ENCODE measurements at regions of chr22 and their contacts with region 1.

Region 1: DNA sequence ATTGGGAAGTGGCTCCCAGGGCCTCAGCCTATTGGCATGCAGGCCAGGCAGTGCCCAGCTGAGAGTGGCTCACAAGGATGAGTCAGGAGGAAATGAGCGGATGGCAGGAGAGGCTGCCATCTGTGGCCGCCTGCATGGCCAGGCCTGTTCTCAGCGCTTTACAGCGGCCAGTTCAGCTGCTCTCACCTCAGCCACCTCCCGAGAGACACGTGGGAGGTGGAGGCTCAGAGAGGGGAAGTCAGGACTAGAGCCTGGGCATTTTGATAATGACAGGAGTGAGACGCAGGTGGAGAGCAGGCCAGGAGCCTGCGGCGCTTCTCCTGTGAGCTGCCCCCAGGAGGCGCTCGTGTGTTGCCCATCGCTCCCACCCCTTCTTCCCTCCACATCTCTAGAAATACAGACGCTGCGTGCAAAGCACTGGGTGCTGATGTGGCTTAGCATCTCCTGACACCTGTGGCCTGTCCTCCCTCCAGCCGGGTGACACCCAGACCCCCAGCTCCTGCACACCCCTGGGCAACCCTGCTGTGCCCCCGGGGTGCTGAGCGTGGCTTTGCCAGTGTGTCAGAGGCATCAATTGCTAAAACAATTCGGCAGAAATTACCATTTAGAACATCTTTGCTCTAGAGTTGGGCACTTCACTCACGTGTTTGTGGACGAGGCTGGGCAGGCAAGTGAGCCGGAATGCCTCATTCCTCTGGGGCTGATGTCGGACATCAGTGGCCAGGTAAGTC is 21.4 kb upstream of the PANX2 start:
- DNase-seq: peak; percentile 45
- ATAC-seq: peak; percentile 55
- H3K4me3 ChIP-seq: no peak overlapping the region
- H3K27ac ChIP-seq: no peak overlapping the region
- H3K4me1 ChIP-seq: no peaks in the 10 kb centered on the region; the same call in 1 of the 2 replicates
- H3K27me3 ChIP-seq: no peaks in the 10 kb centered on the region; the same call in 1 of the 2 replicates
- CTCF ChIP-seq: peak; percentile 57
- POLR2A ChIP-seq: no peak
- RAD21 ChIP-seq: peak; percentile 64

Region 2: DNA sequence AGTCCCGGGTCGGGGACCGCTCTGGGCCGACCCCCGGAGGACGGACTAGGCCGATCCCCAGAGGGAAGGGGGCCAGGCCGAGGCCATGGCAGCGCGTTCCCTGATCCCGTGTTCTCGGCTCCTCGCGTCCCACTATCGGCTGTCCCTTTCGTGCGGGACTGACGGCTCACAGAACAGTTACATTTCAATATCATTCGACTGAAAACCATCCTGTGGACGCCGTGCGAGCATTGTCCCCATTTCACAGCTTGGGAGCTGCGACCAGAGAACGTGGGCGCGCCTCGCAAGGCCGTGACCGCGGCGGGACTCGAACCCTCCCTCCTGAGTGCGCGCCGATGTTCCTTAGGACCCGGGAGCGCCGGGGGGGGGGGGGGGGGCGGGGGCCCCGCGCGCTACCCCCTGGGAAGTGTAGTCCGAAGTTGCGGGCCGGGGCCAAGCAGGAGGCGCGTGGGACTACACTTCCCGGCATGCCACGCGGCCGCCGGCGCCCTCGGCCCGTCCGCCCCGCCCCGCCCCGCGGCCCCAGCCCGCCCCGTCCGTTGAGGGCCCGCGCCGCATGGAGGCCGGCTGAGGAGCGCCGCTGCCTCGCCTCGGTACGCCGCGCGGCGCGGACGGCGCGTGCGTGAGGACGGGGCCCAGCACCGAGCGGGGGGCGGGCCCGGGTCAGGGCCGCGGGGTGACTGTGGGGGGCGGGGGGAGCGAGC is 36.4 kb after region 1 on chr22 and contains the start of gene TRABD:
- CTCF ChIA-PET with region 1: no interaction called
- POLR2A ChIA-PET with region 1: no interaction called
- dilution Hi-C with region 1: no loop called
- in situ Hi-C with region 1: no loop called
- intact Hi-C with region 1: loop called (anchors 1 kb)
- DNase-seq: peak; percentile 82
- ATAC-seq: peak; percentile 89
- H3K4me3 ChIP-seq: peak within 1 kb of the TSS; percentile 59
- H3K27ac ChIP-seq: peak within 1 kb of the TSS; percentile 68
- H3K4me1 ChIP-seq: peaks cover 19% of the 10 kb centered on the region
- H3K27me3 ChIP-seq: no peaks in the 10 kb centered on the region
- CTCF ChIP-seq: no peak
- POLR2A ChIP-seq: no peak
- RAD21 ChIP-seq: no peak
- total RNA-seq, gene TRABD: 13.4 and 13.9 TPM in 2 replicates

Region 3: DNA sequence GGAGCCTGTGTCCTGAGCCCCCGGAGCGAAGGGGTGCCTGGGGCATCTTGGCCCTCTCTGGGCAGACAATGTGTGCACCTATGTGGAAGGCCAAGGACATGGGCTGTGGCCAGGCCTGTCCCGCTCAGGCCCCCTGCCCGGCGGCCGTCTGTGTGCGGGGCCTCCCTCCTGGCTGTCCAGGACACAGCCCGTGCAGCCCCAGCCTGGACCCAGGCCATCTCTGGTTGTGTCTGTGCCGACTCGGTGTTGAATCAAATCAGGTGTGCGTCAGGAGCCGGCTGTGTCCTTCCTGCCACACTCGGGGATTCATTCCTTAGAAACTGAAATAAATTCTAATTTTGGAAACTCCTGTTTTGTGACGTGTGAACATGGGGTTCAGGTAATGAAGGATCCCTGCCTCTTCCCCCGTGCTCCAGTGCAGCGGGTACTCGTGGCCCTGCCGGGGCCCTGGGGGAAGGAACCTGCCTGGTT is 50.1 kb after region 1 on chr22:
- CTCF ChIA-PET with region 1: no interaction called
- POLR2A ChIA-PET with region 1: no interaction called
- dilution Hi-C with region 1: no loop called
- in situ Hi-C with region 1: no loop called
- intact Hi-C with region 1: no loop called
- DNase-seq: no peak
- ATAC-seq: no peak
- H3K4me3 ChIP-seq: no peak overlapping the region
- H3K27ac ChIP-seq: no peak overlapping the region
- H3K4me1 ChIP-seq: peaks cover 4% of the 10 kb centered on the region; the same call in 1 of the 2 replicates
- H3K27me3 ChIP-seq: no peaks in the 10 kb centered on the region
- CTCF ChIP-seq: no peak
- POLR2A ChIP-seq: no peak
- RAD21 ChIP-seq: no peak

Region 4: DNA sequence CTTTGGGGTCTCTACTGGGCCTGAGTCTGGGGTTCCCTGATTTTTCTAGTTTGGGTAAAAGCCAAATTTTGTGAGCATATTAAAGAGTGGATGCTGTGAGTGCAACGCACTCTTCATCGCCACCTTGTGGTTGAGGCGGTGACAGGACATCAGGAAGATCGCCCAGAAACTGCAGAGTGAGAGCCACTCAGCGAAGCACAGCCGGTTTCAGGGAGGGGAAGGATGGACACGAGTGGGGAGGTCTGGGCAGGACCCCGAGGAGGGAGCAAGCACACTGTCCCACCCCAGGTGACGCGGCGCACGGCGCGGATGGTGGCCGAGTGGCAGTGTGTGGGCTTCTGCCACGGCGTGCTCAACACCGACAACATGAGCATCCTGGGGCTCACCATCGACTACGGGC is 60.7 kb after region 1 on chr22:
- CTCF ChIA-PET with region 1: no interaction called
- POLR2A ChIA-PET with region 1: no interaction called
- dilution Hi-C with region 1: no loop called
- in situ Hi-C with region 1: loop called (anchors 5 kb)
- intact Hi-C with region 1: loop called (anchors 1 kb)
- DNase-seq: peak; percentile 57
- ATAC-seq: peak; percentile 75
- H3K4me3 ChIP-seq: no peak overlapping the region
- H3K27ac ChIP-seq: no peak overlapping the region
- H3K4me1 ChIP-seq: no peaks in the 10 kb centered on the region
- H3K27me3 ChIP-seq: no peaks in the 10 kb centered on the region
- CTCF ChIP-seq: peak; percentile 83
- POLR2A ChIP-seq: no peak
- RAD21 ChIP-seq: peak; percentile 74